AG04449 (cell line): ENCODE measurements at regions of chr1 and their contacts with region 1.

Region 1: DNA sequence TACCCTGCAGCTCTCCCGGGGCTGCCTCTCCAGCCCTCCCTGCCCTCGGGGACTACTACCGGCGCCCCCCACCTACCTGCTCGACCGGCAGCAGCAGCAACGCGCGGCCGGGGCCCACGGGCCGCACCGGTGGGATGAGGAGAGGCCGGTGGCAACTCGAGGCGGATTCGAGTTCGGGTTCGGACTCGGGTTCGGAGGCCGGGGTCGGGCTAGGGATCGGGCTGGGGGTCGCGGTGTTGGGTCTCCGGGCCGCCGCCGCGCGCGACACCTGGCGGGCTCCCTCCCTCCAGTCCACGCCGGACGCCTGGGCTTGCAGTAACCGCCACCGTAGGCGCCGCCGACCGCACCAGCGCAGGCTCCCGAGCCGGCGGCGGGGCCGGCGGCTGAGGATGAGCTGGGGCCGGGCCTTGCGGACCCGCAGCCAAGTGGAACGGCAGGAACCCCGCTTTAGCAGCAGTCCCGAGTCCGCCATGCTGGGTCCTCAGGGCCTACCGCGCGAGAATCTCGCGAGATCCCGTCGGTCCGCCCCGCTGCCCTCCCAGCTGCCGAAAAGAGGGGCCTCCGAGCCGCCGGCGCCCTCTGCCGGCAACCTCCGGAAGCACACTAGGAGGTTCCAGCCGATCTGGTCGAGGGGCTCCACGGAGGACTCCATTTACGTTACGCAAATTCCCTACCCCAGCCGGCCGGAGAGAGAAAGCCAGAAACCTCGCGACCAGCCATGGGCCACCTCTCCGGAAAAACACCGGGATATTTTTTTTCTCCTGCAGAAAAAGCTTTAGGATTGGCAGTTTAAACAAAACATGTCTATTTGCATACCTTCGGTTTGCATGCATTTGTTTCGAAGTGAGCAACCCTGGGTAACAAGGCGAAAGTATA is at the start of gene NOL9:
- DNase-seq: peak; percentile 31
- H3K4me3 ChIP-seq: peak within 1 kb of the TSS; percentile 89
- CTCF ChIP-seq: peak; percentile 96

Region 2: DNA sequence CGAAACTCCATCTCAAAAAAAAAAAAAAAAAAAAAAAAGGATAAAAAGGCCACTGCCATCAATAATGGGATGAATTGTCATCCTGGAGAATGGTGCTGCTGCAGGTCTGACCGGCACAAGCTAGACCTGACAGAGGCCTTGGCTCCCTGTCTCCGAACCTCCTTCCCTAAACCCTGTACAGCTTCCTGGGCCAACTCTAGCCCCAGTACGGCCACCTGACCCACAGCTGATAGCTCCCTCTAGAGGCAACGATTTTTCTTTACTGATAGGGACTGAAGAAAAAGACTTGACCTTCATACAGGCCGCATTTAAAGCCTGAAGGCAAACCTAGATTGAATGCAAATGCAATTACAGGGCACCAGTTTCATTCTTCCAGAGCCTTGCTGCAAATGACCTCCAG is 30.7 kb before region 1 on chr1:
- CTCF ChIA-PET with region 1: interaction called, 17 read pairs
- POLR2A ChIA-PET with region 1: no interaction called
- DNase-seq: no peak
- H3K4me3 ChIP-seq: no peak overlapping the region
- CTCF ChIP-seq: peak; percentile 52

Region 3: GRCh38 chr1:6538956-6539355 is 15.3 kb before region 1 on chr1:
- CTCF ChIA-PET with region 1: interaction called, 114 read pairs
- POLR2A ChIA-PET with region 1: no interaction called
- DNase-seq: peak; percentile 67
- H3K4me3 ChIP-seq: no peak overlapping the region
- CTCF ChIP-seq: no peak

Region 4: DNA sequence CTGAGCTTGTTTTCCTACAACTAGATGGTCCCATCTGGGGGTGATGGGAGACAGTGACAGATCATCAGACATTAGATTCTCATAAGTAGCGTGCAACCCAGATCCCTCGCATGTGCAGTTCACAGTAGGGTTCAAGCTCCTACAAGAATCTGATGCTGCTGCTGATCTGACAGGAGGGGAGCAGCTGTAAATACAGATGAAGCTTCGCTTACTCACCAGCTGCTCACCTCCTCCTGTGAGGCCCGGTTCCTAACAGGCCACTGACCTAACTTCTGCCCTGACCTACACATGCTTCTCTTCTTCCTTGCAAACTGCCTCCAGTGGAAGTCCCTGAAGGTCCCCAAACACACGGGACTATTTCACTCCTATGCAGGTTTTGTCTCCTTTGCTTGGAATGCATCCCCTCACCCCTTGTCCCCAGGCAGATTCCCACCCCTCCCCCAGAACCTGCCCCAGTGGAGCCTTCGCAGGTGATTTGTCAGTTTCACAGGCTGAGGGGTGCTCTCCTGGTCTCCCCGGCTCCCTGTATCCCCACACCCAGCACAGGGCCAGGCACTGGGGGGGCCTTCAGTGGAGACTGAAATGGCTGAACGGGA is 19.9 kb after region 1 on chr1:
- CTCF ChIA-PET with region 1: interaction called, 68 read pairs
- POLR2A ChIA-PET with region 1: interaction called, 3 read pairs
- DNase-seq: no peak
- H3K4me3 ChIP-seq: no peak overlapping the region
- CTCF ChIP-seq: no peak

Region 5: GRCh38 chr1:6579374-6580118 is 25.3 kb after region 1 on chr1 and contains the start of gene ZBTB48:
- CTCF ChIA-PET with region 1: interaction called, 68 read pairs
- POLR2A ChIA-PET with region 1: interaction called, 5 read pairs
- DNase-seq: peak; percentile 71
- H3K4me3 ChIP-seq: peak within 1 kb of the TSS; percentile 87
- CTCF ChIP-seq: no peak

Region 6: DNA sequence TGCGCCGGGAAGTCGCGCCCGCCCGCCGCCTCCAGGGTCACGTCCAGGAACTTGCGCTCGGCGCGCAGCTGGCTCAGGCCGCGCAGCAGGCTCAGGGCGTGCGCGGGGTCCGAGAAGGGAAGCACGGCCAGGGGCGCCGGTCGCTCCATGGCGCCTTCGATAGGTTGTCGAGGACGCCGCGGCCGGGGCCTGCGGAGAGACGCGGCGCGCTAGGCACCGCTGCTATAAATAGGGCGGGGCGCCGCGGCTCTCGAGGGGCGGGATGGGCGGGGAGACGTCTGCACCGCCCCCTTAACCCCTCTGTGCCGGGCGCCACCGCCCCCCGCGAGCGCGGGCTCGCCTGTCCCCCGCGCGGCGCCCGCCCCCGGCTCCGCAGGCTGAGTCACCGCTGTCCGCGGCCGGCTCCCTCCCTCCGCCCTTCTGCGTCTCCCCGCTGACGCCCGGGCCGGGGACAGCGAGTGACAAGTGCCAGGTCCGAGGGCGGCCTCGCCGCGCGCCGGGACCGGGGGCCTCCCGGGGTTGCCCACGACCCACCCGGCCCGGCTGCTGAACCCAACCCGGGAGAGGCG is 48.5 kb after region 1 on chr1 and contains the start of gene KLHL21:
- CTCF ChIA-PET with region 1: interaction called, 15 read pairs
- POLR2A ChIA-PET with region 1: interaction called, 5 read pairs
- DNase-seq: no peak
- H3K4me3 ChIP-seq: peak within 1 kb of the TSS; percentile 95
- CTCF ChIP-seq: no peak

Region 7: GRCh38 chr1:6646499-6647148 is 92.4 kb after region 1 on chr1:
- CTCF ChIA-PET with region 1: interaction called, 40 read pairs
- POLR2A ChIA-PET with region 1: no interaction called
- DNase-seq: peak; percentile 4
- H3K4me3 ChIP-seq: no peak overlapping the region
- CTCF ChIP-seq: peak; percentile 50

Region 8: GRCh38 chr1:6691507-6691906 is 137.2 kb after region 1 on chr1:
- CTCF ChIA-PET with region 1: no interaction called
- POLR2A ChIA-PET with region 1: no interaction called
- DNase-seq: no peak
- H3K4me3 ChIP-seq: no peak overlapping the region
- CTCF ChIP-seq: no peak

Region 9: GRCh38 chr1:6743189-6744101 is 189.2 kb after region 1 on chr1:
- CTCF ChIA-PET with region 1: no interaction called
- POLR2A ChIA-PET with region 1: no interaction called
- DNase-seq: peak; percentile 28
- H3K4me3 ChIP-seq: no peak overlapping the region
- CTCF ChIP-seq: no peak